AG04449 (cell line): ENCODE measurements at regions of chr3 and their contacts with region 1.

Region 1: DNA sequence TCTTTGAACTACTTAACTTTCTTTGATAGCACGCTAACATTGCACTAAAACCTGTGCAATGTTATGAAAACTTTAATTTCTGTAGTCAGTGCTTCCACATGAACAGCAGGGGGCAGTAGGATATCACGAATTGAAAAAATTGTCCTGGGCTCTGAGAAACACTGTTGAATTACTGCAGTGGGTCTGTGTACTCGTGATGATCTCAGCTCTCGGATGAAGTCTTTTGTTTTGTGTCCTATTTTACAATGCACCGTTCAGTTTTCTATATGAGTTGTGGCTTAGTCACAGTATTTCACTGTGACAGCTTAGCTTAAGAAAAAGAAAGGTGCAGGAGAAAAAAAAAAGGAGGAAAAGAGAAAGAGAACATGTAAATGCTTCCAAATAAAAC is 141.3 kb upstream of the CCDC54 start:
- DNase-seq: peak; percentile 34
- H3K4me3 ChIP-seq: peak overlapping the region; percentile 49
- CTCF ChIP-seq: peak; percentile 67

Region 2: GRCh38 chr3:107206141-107206540 is 29.8 kb before region 1 on chr3:
- CTCF ChIA-PET with region 1: interaction called, 10 read pairs
- POLR2A ChIA-PET with region 1: no interaction called
- DNase-seq: no peak
- H3K4me3 ChIP-seq: no peak overlapping the region
- CTCF ChIP-seq: peak; percentile 41

Region 3: GRCh38 chr3:107421170-107421792 is 185.4 kb after region 1 on chr3:
- CTCF ChIA-PET with region 1: interaction called, 40 read pairs
- POLR2A ChIA-PET with region 1: no interaction called
- DNase-seq: no peak
- H3K4me3 ChIP-seq: peak overlapping the region; percentile 49
- CTCF ChIP-seq: peak; percentile 61

Region 4: GRCh38 chr3:107562969-107563529 is 327.1 kb after region 1 on chr3:
- CTCF ChIA-PET with region 1: interaction called, 11 read pairs
- POLR2A ChIA-PET with region 1: no interaction called
- DNase-seq: no peak
- H3K4me3 ChIP-seq: no peak overlapping the region
- CTCF ChIP-seq: no peak

Region 5: GRCh38 chr3:107727102-107727501 is 491.2 kb after region 1 on chr3:
- CTCF ChIA-PET with region 1: interaction called, 11 read pairs
- POLR2A ChIA-PET with region 1: no interaction called
- DNase-seq: no peak
- H3K4me3 ChIP-seq: no peak overlapping the region
- CTCF ChIP-seq: no peak

Region 6: DNA sequence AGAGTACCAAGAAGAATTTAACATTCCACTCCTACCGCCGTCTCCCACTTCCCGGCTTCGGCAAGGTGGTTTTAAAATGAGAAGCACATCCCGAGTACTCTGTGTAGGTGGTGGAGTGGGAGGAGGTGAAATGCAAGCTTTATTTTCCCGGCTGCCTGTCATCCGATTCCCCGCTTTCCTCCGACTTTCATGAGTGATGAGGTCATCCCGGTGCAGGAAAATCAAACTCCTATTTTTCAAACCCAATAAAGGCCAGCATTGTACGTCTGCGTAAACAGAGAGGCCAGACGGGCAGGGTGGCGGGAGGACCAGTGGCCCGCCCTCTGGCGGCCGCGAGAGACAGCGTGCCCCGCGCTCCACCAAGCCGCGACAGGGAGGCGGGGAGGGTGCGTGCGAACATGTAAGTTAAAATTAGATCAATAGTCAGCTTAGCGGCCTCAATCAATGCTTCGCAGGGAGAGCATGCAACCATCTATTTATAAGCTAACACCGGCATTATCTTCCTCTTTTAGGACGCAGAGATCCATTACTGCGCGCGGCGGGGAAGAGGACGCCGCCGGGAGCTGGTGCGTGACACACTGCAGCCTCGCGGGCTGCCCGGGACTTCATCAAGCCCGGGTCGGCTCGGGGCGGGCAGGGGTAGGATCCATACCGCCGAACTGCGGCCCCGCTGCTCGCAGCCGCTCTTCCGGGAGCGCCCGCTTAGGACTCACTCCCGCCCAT is 691.6 kb after region 1 on chr3:
- CTCF ChIA-PET with region 1: interaction called, 22 read pairs
- POLR2A ChIA-PET with region 1: no interaction called
- DNase-seq: no peak
- H3K4me3 ChIP-seq: peak overlapping the region; percentile 67
- CTCF ChIP-seq: peak; percentile 96